Dorsolateral prefrontal cortex (tissue), 120 donors: ENCODE measurements at regions of chr2 and their contacts with region 1.

Region 1: DNA sequence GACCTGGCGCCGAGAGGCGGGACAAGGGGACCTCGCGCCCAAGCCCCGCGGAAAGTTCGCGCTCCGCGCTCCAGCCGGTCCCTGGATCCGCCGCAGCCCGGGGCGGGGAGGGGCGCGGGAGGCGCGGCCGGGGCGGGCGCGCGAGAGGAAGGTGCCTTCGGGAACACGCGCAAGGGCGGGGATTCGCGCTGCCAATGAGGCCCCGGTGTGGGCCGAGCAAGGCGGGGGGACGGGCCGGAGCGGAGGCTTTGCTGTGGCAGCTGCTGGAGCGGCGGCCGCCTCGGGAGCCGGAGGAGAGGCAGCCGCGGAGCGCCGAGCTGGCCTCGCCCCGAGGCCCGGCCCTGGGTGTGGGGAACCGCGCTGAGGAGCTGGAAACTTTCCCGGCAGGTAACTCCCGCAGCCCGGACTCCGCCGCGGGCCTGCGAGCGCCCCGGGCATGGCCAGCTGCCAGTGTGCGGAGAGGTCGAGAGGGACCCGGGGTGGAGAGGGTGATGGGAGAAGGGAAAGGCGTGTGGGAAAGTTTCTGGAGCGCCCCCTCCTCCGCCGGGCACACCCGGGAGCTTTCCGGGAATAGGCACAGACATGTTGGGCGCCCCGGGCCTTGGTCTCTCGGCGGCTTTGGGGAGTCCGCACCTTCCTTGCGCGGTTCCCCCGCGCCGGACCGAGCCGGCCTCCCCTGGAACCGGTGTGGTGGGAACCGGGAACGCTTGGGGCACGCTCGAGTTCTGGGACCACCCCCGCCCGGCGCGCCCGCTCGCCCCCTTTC is at the start of gene TANC1:
- DNase-seq: peak; percentile 79 to 96 (median 91)
- H3K4me3 ChIP-seq: peak within 1 kb of the TSS; percentile 59 to 95 (median 85)
- H3K27ac ChIP-seq: peak within 1 kb of the TSS; percentile 55 to 99 (median 95)
- H3K27me3 ChIP-seq: peaks cover 0 to 3% (median 0%) of the 10 kb centered on the region in 45 donors
- CTCF ChIP-seq: peak in 17 of 56 donors; percentile 3 to 32 (median 20)
- total RNA-seq, gene TANC1: 11.9 to 68.3 (median 20.7) TPM

Region 2: DNA sequence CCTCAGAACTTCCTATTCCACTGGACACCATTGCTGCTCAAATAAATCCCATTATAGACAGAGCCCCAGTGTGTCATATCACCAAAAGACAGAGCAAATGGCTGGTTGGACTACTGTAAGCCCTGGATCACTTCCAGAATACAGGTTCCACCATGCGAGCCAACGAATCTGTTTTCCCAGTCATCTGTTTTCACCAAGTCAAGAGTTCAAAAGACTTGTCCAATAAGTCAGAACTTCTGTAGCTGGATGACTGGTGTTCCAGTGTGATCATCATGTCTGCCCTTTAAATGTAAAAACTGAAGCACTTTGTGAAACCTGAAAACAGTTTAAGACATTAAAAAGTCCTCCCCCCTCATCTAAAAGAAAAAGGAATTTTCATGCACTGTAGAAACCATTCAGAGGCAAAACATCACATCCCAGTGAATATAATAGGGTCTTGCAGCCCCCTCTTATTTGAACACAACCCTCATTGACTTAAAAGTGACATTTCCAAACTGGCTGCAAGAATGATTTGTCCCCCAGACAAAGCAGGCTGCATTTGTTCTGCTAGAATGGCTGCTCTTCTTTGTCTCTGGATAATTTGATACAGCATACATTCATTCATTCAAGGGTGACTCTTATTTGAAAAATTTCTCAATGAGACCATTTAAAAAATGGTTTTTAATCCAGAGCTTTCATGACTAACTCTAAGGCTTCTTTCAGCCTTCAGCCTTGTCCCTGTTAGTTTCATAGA is 64.7 kb before region 1 on chr2:
- intact Hi-C with region 1: loop called (anchors 5 to 10 kb)
- DNase-seq: no peak
- H3K4me3 ChIP-seq: no peak overlapping the region
- H3K27ac ChIP-seq: no peak overlapping the region
- H3K27me3 ChIP-seq: no peaks in the 10 kb centered on the region
- CTCF ChIP-seq: no peak

Region 3: GRCh38 chr2:158998551-158999248 is 30.1 kb after region 1 on chr2:
- intact Hi-C with region 1: loop called in 1 of 2 experiments (anchors 2 kb)
- DNase-seq: peak in 3 of 10 donors; percentile 18 to 65 (median 34)
- H3K4me3 ChIP-seq: peak overlapping the region in 36 of 59 donors; percentile 1 to 46 (median 21)
- H3K27ac ChIP-seq: peak overlapping the region; percentile 2 to 95 (median 88)
- H3K27me3 ChIP-seq: peaks cover 0 to 3% (median 0%) of the 10 kb centered on the region in 45 donors
- CTCF ChIP-seq: no peak

Region 4: DNA sequence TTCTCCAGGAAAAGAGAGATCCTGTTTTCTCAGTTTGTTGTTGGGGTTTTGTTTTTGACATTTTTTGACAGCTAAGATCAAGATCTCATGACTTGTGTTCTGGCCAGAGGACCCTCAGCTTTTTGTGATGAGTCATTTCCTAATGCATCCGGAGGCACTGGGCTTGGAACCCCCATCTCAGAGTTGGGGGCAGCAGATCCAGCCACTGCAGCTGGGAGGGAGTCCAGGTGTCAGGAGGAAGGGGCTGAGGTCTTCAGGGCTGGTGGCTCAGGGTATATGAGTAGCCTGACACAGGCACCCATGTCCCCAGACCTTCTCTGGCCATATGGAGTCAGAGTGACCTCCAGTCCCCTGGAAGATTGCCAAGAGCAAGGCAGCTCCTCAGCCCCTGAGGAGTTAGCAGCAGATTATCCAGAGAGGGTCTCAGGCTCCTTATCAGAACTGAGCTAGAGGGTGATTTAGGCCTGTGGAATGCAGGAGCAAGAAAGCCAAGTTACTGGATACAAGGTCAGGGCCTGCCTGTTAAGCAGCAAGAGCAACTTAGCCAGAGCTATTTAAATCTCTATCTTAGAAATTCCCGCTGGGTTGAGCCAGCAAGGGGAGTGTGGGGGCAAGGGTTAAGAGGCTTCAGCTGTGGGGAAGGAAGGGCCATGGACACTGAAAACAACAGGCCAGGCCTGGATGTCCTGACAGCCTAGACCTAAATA is 62.2 kb after region 1 on chr2:
- intact Hi-C with region 1: loop called in 1 of 2 experiments (anchors 10 kb)
- DNase-seq: no peak
- H3K4me3 ChIP-seq: no peak overlapping the region
- H3K27ac ChIP-seq: peak overlapping the region in 52 of 59 donors; percentile 1 to 83 (median 49)
- H3K27me3 ChIP-seq: no peaks in the 10 kb centered on the region
- CTCF ChIP-seq: no peak

Region 5: GRCh38 chr2:159111346-159111924 is 142.9 kb after region 1 on chr2:
- intact Hi-C with region 1: loop called (anchors 2 to 5 kb)
- DNase-seq: peak in 8 of 10 donors; percentile 30 to 74 (median 62)
- H3K4me3 ChIP-seq: peak overlapping the region in 8 of 59 donors; percentile 2 to 27 (median 17)
- H3K27ac ChIP-seq: peak overlapping the region in 18 of 59 donors; percentile 7 to 64 (median 36)
- H3K27me3 ChIP-seq: no peaks in the 10 kb centered on the region
- CTCF ChIP-seq: peak in 11 of 56 donors; percentile 8 to 37 (median 20)

Region 6: DNA sequence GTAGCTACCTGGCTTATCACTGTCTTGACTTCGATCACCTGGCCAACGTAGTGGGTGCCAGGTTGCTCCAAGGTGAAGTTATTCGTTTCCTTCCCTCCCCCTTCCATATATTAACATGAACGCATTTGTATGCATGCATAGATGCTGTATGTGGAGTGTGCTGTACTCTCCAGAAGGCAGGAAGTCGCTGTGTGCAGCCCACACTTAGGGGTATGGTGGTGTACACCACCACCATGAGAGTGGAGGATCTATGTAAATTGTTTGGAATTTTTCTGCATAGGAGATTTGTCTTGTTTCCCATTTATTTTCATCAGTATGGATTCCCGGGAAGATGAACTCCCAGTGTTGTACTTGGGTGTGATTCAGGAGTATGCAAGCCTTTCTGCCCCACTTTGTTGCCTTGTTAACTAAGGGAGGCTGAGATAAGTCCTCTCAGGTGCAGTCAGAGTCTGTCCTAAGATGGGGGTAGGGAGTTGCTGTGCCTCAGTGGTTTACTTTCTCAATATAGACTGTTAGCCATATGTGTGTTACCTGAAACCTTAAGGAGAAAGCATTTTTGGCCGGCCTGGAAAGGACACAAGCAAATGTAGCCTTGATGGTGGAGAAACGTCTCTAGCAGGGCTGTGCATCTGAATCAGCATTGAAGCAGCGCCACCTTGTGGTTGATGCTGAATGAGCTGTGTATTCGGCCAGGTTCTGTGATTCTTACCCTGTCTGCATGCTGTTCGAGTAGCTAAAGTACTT is 149.7 kb after region 1 on chr2:
- intact Hi-C with region 1: loop called (anchors 2 to 5 kb)
- DNase-seq: peak; percentile 80 to 96 (median 88)
- H3K4me3 ChIP-seq: no peak overlapping the region
- H3K27ac ChIP-seq: peak overlapping the region in 6 of 59 donors; percentile 16 to 57 (median 41)
- H3K27me3 ChIP-seq: no peaks in the 10 kb centered on the region
- CTCF ChIP-seq: peak; percentile 92 to 100 (median 97)

Region 7: DNA sequence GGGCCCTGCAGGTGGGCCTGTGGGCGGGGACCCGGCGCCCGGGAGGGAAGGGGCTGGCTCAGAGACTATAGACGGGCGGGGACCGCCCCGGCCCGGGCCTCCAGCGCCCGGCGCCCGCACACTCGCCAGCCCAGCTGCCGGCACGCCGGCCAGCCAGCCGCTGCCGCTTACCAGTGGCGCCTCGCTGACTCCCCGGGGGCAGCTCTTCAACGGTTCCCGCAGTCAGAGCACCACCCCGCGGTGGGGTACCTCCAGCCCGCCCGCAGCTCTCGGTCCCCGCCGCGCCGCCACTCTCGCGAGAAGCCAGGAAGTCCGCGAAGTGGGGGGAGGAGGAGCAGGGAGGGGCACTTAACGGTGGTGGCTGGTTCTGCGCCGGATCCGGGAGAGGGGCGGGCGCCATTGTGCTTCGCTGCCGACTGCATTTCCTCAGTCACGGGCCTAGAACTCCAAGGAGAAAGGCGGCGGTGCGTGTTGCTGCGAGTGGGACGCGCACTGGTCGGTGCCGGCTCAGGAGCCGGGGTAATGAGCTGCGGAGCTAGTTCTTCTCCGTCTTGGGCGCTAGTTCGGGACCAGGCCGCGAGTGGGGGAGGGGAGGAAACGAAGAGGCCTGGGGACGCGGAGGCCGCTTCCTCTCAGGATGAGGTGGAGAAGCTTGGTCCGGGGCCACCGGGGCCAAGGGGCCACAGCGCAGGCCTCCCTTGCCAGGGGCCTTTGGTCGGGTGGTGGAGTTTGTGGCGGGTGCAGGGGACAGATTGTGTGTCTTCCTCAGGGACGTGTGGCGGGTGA is 743.8 kb after region 1 on chr2 and contains the start of gene MARCHF7:
- intact Hi-C with region 1: loop called in 1 of 2 experiments (anchors 5 kb)
- DNase-seq: peak; percentile 86 to 97 (median 94)
- H3K4me3 ChIP-seq: peak within 1 kb of the TSS; percentile 68 to 98 (median 92)
- H3K27ac ChIP-seq: peak within 1 kb of the TSS; percentile 84 to 99 (median 96)
- H3K27me3 ChIP-seq: no peaks in the 10 kb centered on the region
- CTCF ChIP-seq: peak in 54 of 56 donors; percentile 35 to 82 (median 60)
- total RNA-seq, gene MARCHF7: 45.9 to 95.4 (median 65.5) TPM